Left ventricle myocardium inferior (tissue), 1 donor: ENCODE measurements at regions of chr1 and their contacts with region 1.

Region 1: GRCh38 chr1:182397771-182398393 is 2.6 kb downstream of the TEDDM1 start:
- DNase-seq: no peak
- H3K4me3 ChIP-seq: no peak overlapping the region
- H3K27ac ChIP-seq: peak overlapping the region; percentile 97
- H3K4me1 ChIP-seq: peaks cover 41% of the 10 kb centered on the region
- H3K27me3 ChIP-seq: no peaks in the 10 kb centered on the region
- CTCF ChIP-seq: no peak

Region 2: DNA sequence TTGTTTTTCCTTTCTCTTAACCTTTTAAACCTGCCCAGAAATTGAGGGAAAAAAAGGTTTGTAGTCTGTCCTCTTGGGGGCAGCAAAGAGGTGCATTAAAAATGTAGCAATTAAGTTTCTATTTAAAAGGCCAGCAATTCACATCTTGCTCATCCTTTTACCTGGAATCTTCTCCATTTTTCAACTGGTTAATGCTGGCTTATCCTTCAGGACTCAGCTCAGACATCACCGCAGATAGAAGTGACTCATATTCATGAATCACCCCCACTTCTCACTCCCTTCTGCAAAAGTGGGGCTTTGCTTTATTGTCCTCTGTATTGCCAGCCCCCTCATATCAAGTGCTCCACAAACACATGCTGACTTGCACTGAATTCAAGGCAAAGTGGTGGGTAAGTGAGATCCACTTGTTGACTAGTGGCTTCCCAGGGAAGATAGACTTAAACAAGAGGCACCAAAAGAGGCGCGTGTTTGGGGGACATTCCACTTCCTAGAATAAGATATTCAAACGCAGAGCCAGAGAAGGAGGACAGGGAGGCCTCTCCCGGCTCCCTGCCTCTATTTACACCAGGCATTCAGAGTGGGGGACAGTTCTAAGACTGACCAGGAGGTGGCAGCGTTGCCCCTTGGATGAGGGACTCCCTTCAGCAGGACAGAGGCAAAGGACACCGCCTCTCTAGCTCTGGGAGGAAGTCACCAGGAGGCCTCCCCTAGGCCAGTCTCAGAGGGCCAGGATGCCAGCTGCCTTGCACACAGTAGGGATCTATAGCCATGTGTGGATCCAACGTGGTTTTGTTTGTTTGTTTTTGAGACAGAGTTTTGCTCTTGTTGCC is 313.2 kb before region 1 on chr1:
- intact Hi-C with region 1: loop called (anchors 5 kb)
- DNase-seq: peak; percentile 86
- H3K4me3 ChIP-seq: no peak overlapping the region
- H3K27ac ChIP-seq: no peak overlapping the region
- H3K4me1 ChIP-seq: peaks cover 5% of the 10 kb centered on the region
- H3K27me3 ChIP-seq: no peaks in the 10 kb centered on the region
- CTCF ChIP-seq: peak; percentile 85

Region 3: DNA sequence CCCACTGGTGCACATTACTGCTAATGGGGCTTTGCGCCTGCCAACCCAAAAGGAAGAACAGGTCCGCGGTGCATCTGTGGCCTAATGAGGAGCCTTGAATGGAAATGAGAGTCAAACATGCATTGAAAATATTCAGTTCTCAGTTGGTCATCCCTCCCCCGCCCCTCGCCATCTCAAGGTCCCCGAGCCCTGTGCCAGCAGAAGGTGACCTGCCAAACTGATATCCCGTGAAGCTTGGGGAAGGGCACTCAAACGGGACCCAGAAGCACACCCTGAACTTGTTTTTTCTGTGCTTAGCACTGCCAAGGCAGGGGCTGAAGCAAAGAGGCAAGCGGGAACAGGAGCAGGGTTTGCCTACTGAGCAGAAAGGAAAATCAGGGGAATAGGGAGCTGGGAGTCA is 268.5 kb before region 1 on chr1:
- intact Hi-C with region 1: no loop called
- DNase-seq: no peak
- H3K4me3 ChIP-seq: no peak overlapping the region
- H3K27ac ChIP-seq: no peak overlapping the region
- H3K4me1 ChIP-seq: no peaks in the 10 kb centered on the region
- H3K27me3 ChIP-seq: no peaks in the 10 kb centered on the region
- CTCF ChIP-seq: no peak

Region 4: DNA sequence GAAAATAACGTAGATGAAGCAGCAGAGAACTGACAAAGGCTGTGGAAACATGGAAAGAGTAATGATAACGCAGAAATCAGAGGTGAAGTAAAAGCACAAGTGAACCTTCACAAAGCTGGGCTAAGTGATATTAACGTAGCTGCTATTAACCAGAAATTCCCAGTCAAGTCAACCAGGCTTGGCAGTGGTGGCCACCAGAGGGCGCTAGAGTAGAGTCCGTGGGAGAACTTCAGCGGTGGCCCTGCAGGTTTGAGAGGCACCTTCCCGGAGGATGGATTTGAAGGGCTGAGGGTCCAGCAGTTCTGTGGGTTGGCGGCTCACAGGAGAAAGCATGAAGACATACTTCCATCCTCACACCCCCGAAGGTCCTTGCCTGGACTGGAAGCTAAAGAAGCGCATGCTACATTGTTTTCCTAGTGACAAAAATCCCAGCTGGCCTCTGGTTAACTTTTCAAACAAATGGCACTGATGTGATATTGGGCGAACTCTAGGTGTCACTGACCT is 254.7 kb before region 1 on chr1:
- intact Hi-C with region 1: loop called (anchors 2 kb)
- DNase-seq: peak; percentile 93
- H3K4me3 ChIP-seq: no peak overlapping the region
- H3K27ac ChIP-seq: peak overlapping the region; percentile 93
- H3K4me1 ChIP-seq: peaks cover 21% of the 10 kb centered on the region
- H3K27me3 ChIP-seq: no peaks in the 10 kb centered on the region
- CTCF ChIP-seq: peak; percentile 96

Region 5: GRCh38 chr1:182185813-182186756 is 211.8 kb before region 1 on chr1:
- intact Hi-C with region 1: no loop called
- DNase-seq: no peak
- H3K4me3 ChIP-seq: no peak overlapping the region
- H3K27ac ChIP-seq: no peak overlapping the region
- H3K4me1 ChIP-seq: no peaks in the 10 kb centered on the region
- H3K27me3 ChIP-seq: peaks cover 14% of the 10 kb centered on the region
- CTCF ChIP-seq: no peak

Region 6: DNA sequence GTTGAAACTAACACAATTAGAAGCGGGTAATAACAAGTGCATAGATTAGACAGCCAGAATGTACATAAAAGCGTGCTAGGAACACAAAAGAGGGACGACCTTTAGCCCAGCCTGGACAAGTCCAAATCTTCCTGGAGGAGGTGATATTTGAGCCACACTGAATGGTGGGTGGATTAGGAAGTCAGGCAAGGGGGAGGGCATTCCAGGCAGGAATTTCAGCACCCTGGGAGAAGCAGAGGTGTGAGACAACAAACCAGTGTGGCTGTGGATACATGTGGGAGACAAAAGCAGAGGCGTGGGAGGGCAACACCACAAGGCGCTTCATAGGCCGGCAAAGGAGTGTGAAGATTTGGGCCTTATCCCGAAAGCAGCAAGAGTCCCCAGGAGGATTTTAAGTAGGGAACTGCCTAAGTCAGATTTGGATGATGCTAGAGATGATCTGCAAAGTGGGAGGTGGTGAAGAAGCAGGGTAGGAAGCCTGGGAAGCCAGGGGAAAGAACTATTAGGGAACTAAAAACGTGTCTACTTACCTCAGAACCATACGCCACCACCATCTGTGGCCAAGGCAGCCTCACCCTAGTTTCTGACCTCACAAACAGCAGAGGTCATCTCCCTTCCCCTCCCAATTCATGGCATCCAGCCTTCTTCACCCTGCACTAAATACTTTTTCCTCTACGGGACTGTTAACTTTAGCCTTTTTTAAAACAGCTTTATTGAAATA is 88.1 kb before region 1 on chr1:
- intact Hi-C with region 1: no loop called
- DNase-seq: no peak
- H3K4me3 ChIP-seq: no peak overlapping the region
- H3K27ac ChIP-seq: no peak overlapping the region
- H3K4me1 ChIP-seq: no peaks in the 10 kb centered on the region
- H3K27me3 ChIP-seq: no peaks in the 10 kb centered on the region
- CTCF ChIP-seq: no peak

Region 7: DNA sequence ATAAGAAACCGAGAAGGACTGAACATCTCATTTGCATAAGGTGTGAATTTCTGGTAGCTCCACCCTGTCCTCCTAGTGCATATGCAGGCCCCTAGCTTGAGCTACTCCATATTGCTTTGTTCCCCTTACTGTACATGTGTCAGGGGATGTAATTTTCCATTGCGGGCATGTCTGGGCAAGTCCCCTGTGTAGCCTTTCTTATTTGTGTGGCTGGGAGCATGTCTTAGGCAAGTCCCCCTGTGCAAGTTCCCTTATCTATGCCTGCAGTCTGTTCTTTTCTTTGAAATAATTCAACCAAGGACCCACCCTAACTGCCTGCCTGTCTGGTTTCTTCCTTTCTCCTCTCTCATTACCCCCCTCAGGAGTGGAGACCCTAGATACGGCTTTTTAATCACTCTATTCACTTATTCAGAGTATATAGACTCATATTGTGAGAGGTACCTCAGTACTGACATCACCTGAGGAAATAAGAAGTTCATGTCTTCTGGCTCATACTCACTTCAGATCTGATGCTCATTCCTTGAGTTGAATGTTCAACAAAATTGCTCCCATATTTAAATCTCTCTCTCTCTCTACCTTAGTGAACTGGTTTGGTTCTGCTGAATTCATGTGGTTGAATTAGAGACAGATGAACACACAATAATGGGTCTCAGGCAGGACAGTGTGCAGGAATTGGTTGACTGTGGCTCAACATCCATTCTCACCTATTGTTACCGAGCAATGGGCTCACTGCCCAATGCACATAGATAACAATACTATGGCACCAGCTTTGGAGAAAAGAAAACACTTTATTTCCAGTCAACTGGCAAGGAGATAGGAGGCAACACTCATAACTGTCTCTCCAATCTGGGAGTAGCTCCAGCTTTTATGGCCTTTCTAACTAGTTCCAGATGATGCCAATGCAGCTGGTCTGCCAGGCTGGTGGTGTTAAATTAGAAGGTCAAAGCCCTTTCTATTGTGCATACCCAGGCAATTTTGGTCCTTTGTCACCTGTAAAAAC is 363.8 kb after region 1 on chr1:
- intact Hi-C with region 1: no loop called
- DNase-seq: no peak
- H3K4me3 ChIP-seq: no peak overlapping the region
- H3K27ac ChIP-seq: no peak overlapping the region
- H3K4me1 ChIP-seq: peaks cover 9% of the 10 kb centered on the region
- H3K27me3 ChIP-seq: no peaks in the 10 kb centered on the region
- CTCF ChIP-seq: no peak